ENCODE measurements at regions of chr18 and their contacts with region 1.

Region 1: GRCh38 chr18:77054606-77055428 is 77.8 kb downstream of the MBP start:
- DNase-seq: peak; percentile 79
- ATAC-seq: peak; percentile 88
- H3K4me3 Mint-ChIP-seq: peak overlapping the region; percentile 90
- H3K27ac Mint-ChIP-seq: peak overlapping the region; percentile 100
- H3K4me1 Mint-ChIP-seq: peaks cover 45% of the 10 kb centered on the region
- H3K27me3 Mint-ChIP-seq: no peaks in the 10 kb centered on the region

Region 2: GRCh38 chr18:77000527-77000926 is 54.3 kb before region 1 on chr18:
- POLR2A ChIA-PET with region 1: interaction called, 12 read pairs
- DNase-seq: peak; percentile 63
- ATAC-seq: no peak
- H3K4me3 Mint-ChIP-seq: no peak overlapping the region
- H3K27ac Mint-ChIP-seq: no peak overlapping the region
- H3K4me1 Mint-ChIP-seq: peaks cover 22% of the 10 kb centered on the region
- H3K27me3 Mint-ChIP-seq: peaks cover 2% of the 10 kb centered on the region

Region 3: GRCh38 chr18:77067291-77068061 is 12.7 kb after region 1 on chr18:
- POLR2A ChIA-PET with region 1: interaction called, 21 read pairs
- DNase-seq: peak; percentile 75
- ATAC-seq: peak; percentile 69
- H3K4me3 Mint-ChIP-seq: peak overlapping the region; percentile 67
- H3K27ac Mint-ChIP-seq: peak overlapping the region; percentile 86
- H3K4me1 Mint-ChIP-seq: peaks cover 74% of the 10 kb centered on the region
- H3K27me3 Mint-ChIP-seq: no peaks in the 10 kb centered on the region